Caco-2 (cell line): ENCODE measurements at regions of chr20 and their contacts with region 1.

Region 1: GRCh38 chr20:45971675-45972499 is at the start of gene ZNF335:
- DNase-seq: peak; percentile 99 to 100
- H3K4me3 ChIP-seq: peak within 1 kb of the TSS; percentile 54
- H3K4me3 Mint-ChIP-seq: peak within 1 kb of the TSS; percentile 80
- H3K27ac Mint-ChIP-seq: peak within 1 kb of the TSS; percentile 81
- H3K4me1 ChIP-seq: peaks cover 7% of the 10 kb centered on the region; the same call in 1 of the 2 replicates
- H3K4me1 Mint-ChIP-seq: peaks cover 13% of the 10 kb centered on the region
- H3K27me3 ChIP-seq: no peaks in the 10 kb centered on the region
- H3K27me3 Mint-ChIP-seq: peaks cover 5% of the 10 kb centered on the region
- CTCF ChIP-seq: peak; percentile 29 to 55
- total RNA-seq, gene ZNF335: 35.1 and 38.1 TPM in 2 replicates

Region 2: GRCh38 chr20:45679650-45680049 is 292.2 kb before region 1 on chr20:
- CTCF ChIA-PET with region 1: no interaction called
- POLR2A ChIA-PET with region 1: no interaction called
- intact Hi-C with region 1: no loop called
- DNase-seq: no peak
- H3K4me3 ChIP-seq: no peak overlapping the region
- H3K4me3 Mint-ChIP-seq: no peak overlapping the region
- H3K27ac Mint-ChIP-seq: no peak overlapping the region
- H3K4me1 ChIP-seq: no peaks in the 10 kb centered on the region
- H3K4me1 Mint-ChIP-seq: no peaks in the 10 kb centered on the region
- H3K27me3 ChIP-seq: no peaks in the 10 kb centered on the region
- H3K27me3 Mint-ChIP-seq: peaks cover 4% of the 10 kb centered on the region
- CTCF ChIP-seq: no peak

Region 3: GRCh38 chr20:45812157-45813020 is 159.5 kb before region 1 on chr20 and contains the start of gene UBE2C:
- CTCF ChIA-PET with region 1: interaction called, 3 read pairs
- POLR2A ChIA-PET with region 1: interaction called, 3 read pairs
- intact Hi-C with region 1: loop called (anchors 5 kb)
- DNase-seq: peak; percentile 100
- H3K4me3 ChIP-seq: peak within 1 kb of the TSS; percentile 91
- H3K4me3 Mint-ChIP-seq: peak within 1 kb of the TSS; percentile 95
- H3K27ac Mint-ChIP-seq: peak within 1 kb of the TSS; percentile 92
- H3K4me1 ChIP-seq: peaks cover 28% of the 10 kb centered on the region
- H3K4me1 Mint-ChIP-seq: peaks cover 20% of the 10 kb centered on the region
- H3K27me3 ChIP-seq: no peaks in the 10 kb centered on the region
- H3K27me3 Mint-ChIP-seq: no peaks in the 10 kb centered on the region
- CTCF ChIP-seq: no peak
- total RNA-seq, gene UBE2C: 409 and 423 TPM in 2 replicates

Region 4: DNA sequence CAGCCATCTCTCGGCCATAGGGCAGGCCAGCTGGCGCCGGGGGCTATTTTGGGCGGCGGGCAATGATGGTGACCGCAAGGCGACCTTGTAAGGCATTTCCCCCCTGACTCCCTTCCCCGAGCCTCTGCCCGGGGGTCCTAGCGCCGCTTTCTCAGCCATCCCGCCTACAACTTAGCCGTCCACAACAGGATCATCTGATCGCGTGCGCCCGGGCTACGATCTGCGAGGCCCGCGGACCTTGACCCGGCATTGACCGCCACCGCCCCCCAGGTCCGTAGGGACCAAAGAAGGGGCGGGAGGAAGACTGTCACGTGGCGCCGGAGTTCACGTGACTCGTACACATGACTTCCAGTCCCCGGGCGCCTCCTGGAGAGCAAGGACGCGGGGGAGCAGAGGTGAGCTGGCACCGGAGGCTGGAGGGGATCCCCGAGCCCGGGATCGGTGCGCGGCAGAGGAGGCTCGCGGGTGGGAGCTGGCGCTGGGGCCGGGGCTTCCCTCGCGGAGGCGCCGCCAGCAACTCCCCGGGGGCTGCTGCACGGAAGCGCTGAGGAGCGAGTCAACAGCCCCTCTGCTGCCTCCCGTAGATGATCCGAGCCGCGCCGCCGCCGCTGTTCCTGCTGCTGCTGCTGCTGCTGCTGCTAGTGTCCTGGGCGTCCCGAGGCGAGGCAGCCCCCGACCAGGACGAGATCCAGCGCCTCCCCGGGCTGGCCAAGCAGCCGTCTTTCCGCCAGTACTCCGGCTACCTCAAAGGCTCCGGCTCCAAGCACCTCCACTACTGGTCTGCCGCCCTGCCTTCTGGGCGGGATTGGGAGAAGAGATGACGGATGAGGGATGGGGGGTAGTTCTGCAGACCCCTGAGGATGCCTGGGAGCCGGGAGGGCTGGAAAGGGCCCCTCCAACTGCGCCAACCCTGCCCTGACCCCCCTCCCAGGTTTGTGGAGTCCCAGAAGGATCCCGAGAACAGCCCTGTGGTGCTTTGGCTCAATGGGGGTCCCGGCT is 80.6 kb before region 1 on chr20 and contains the starts of genes CTSA and NEURL2:
- CTCF ChIA-PET with region 1: interaction called, 21 read pairs
- POLR2A ChIA-PET with region 1: no interaction called
- intact Hi-C with region 1: no loop called
- DNase-seq: peak; percentile 99
- H3K4me3 ChIP-seq: peak within 1 kb of the TSS; percentile 94
- H3K4me3 Mint-ChIP-seq: peak within 1 kb of the TSS; percentile 95
- H3K27ac Mint-ChIP-seq: peak within 1 kb of the TSS; percentile 95
- H3K4me1 ChIP-seq: peaks cover 8% of the 10 kb centered on the region
- H3K4me1 Mint-ChIP-seq: peaks cover 36% of the 10 kb centered on the region
- H3K27me3 ChIP-seq: no peaks in the 10 kb centered on the region
- H3K27me3 Mint-ChIP-seq: no peaks in the 10 kb centered on the region
- CTCF ChIP-seq: peak; percentile 10 to 34
- total RNA-seq, gene CTSA: 282 and 294 TPM in 2 replicates
- total RNA-seq, gene NEURL2: 12.6 TPM in 2 replicates

Region 5: DNA sequence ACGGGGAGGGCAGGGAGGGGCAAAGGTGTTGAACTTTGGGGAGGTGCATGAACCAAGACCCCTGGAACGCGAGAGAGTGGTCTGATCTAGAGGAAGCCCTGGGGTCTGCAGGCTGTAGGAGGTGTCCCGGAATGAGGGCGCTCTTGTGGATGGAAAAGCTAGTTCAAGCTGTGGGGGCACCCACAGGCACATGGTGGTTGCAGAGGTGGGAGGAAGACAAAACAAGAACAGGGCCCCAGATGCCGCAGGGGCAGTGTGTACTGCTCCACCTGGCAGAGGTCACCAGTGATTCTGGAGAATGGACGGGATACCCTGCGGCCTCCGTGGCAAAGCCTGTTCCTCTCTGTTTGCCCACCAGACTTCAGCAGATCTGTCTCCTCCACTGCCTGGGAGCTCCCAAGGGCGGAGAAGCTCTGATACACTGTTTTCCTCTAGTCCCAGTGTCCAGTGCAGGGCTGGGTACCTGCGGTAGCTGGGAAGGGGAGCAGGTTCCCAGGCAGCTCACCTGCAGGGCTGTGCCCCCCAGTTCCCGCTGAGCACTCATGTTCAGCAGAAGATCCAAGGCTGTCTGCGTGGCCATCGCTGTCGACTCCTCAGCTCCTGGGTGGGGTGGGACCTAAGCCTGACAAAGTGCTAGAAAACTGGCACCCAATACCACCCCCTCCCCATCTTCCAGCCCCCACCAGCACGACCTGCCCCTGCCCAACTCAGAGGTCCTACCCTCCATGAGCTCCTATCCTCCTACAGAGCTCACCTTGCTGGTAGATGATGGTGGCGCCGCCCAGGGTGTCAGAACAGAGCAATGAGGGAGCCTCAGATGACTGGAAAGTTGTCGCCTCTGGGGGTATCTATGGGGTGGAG is 14.6 kb before region 1 on chr20:
- CTCF ChIA-PET with region 1: interaction called, 24 read pairs
- POLR2A ChIA-PET with region 1: no interaction called
- intact Hi-C with region 1: no loop called
- DNase-seq: peak in 1 of 2 experiments; percentile 43
- H3K4me3 ChIP-seq: no peak overlapping the region
- H3K4me3 Mint-ChIP-seq: no peak overlapping the region
- H3K27ac Mint-ChIP-seq: no peak overlapping the region
- H3K4me1 ChIP-seq: no peaks in the 10 kb centered on the region
- H3K4me1 Mint-ChIP-seq: no peaks in the 10 kb centered on the region
- H3K27me3 ChIP-seq: no peaks in the 10 kb centered on the region
- H3K27me3 Mint-ChIP-seq: no peaks in the 10 kb centered on the region
- CTCF ChIP-seq: no peak

Region 6: GRCh38 chr20:46013826-46014516 is 42.1 kb after region 1 on chr20:
- CTCF ChIA-PET with region 1: interaction called, 9 read pairs
- POLR2A ChIA-PET with region 1: no interaction called
- intact Hi-C with region 1: loop called (anchors 5 kb)
- DNase-seq: peak; percentile 81 to 85
- H3K4me3 ChIP-seq: peak overlapping the region; percentile 16; the same call in 1 of the 2 replicates
- H3K4me3 Mint-ChIP-seq: peak overlapping the region; percentile 52
- H3K27ac Mint-ChIP-seq: no peak overlapping the region
- H3K4me1 ChIP-seq: peaks cover 8% of the 10 kb centered on the region
- H3K4me1 Mint-ChIP-seq: peaks cover 6% of the 10 kb centered on the region
- H3K27me3 ChIP-seq: no peaks in the 10 kb centered on the region; the same call in 1 of the 2 replicates
- H3K27me3 Mint-ChIP-seq: peaks cover 38% of the 10 kb centered on the region
- CTCF ChIP-seq: peak; percentile 71 to 94